Stomach (tissue), 19 donors: ENCODE measurements at regions of chr19 and their contacts with region 1.

Region 1: DNA sequence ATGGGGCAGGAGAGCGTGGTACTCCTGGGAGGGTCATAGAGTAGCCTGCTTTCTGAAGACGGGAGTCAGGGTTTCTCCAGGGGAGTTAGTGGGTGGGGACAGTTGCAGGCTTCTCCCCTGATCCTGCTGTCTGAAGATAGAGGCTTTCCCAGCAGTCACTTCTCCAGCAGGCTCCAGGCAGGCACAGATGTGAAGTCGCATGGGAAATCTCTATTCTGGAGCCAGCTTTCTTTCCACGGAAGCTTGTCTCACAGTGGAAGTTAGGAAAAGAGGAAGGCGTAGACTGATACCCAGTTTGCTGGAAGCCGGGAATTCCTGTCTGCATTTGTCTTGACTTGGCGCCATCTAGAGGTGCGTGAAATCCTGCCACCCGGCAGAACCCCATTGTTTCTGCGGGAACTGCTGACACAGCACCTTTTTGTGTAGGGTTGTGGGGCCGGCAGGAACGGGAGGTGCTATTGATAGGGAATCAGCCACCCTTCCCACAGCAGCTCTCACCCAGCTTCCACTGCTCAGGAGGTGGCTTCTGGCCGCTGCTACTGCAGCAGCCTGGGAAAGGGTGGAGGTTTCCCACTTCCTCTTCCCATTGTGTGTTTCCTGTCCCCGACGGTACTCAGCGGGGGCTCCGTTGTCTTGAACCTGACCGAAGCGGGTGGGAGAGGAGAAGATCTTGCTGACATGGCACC is 28.5 kb upstream of the NPAS1 start:
- DNase-seq: peak; percentile 80 to 94
- H3K4me3 ChIP-seq: no peak overlapping the region
- H3K27ac ChIP-seq: peak overlapping the region; percentile 13 to 64 (median 50)
- H3K4me1 ChIP-seq: peaks cover 4 to 21% (median 14%) of the 10 kb centered on the region in 4 donors
- H3K27me3 ChIP-seq: no peaks in the 10 kb centered on the region
- CTCF ChIP-seq: peak in 5 of 7 experiments; percentile 75 to 90 (median 83)
- EP300 ChIP-seq: no peak
- POLR2A ChIP-seq: no peak

Region 2: GRCh38 chr19:46753420-46754155 is 237.5 kb before region 1 on chr19:
- intact Hi-C with region 1: loop called (anchors 10 kb)
- DNase-seq: peak; percentile 75 to 82
- H3K4me3 ChIP-seq: no peak overlapping the region
- H3K27ac ChIP-seq: no peak overlapping the region
- H3K4me1 ChIP-seq: peaks cover 0 to 44% (median 12%) of the 10 kb centered on the region in 4 donors
- H3K27me3 ChIP-seq: no peaks in the 10 kb centered on the region
- CTCF ChIP-seq: peak in 5 of 7 experiments; percentile 5 to 47 (median 32)
- EP300 ChIP-seq: no peak
- POLR2A ChIP-seq: no peak

Region 3: DNA sequence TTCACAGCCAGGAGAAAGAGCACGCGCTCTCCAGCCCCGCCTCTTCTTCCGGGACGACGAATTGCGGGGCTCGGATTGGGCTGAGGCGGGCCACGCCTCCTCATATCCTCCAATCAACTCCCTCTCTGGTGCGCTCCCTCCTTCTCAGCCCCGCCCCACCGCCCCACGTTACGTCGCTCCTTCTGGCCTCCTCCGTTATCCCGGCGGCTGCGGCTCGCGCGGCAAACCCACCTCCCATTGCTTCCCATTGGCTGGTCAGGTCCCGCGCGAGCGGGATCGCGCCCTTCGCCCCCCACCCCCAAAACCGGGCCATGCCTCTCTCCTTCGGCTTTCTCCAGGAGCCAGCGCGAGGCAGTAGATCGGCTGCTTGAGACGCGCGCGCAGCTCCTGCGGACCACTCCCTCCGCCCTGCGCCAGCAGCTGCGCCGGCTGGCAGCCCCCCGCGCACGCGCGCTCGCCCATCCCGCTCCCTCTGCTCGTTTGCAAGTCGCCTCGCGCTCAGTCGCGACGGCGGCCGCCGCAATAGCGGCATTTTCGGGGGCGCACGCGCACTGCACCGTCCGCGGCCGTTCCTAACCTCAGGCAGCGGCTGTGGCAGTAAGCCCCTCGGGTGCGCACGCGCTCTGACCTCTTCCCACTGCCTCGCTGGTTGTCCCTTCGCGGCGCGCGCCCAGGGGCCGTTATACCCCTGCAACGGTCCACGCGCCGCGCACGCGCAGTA is 130.8 kb before region 1 on chr19:
- intact Hi-C with region 1: loop called (anchors 5 kb)
- DNase-seq: peak; percentile 98 to 99
- H3K4me3 ChIP-seq: peak overlapping the region; percentile 80 to 95 (median 91)
- H3K27ac ChIP-seq: peak overlapping the region; percentile 95 to 99 (median 97)
- H3K4me1 ChIP-seq: peaks cover 41 to 64% (median 62%) of the 10 kb centered on the region in 4 donors
- H3K27me3 ChIP-seq: no peaks in the 10 kb centered on the region
- CTCF ChIP-seq: no peak
- EP300 ChIP-seq: no peak
- POLR2A ChIP-seq: no peak